Activated CD4-positive, alpha-beta memory T cell treated with anti-CD3 and anti-CD28 coated beads for 36 hours (primary cell): ENCODE measurements at regions of chr15 and their contacts with region 1.

Region 1: DNA sequence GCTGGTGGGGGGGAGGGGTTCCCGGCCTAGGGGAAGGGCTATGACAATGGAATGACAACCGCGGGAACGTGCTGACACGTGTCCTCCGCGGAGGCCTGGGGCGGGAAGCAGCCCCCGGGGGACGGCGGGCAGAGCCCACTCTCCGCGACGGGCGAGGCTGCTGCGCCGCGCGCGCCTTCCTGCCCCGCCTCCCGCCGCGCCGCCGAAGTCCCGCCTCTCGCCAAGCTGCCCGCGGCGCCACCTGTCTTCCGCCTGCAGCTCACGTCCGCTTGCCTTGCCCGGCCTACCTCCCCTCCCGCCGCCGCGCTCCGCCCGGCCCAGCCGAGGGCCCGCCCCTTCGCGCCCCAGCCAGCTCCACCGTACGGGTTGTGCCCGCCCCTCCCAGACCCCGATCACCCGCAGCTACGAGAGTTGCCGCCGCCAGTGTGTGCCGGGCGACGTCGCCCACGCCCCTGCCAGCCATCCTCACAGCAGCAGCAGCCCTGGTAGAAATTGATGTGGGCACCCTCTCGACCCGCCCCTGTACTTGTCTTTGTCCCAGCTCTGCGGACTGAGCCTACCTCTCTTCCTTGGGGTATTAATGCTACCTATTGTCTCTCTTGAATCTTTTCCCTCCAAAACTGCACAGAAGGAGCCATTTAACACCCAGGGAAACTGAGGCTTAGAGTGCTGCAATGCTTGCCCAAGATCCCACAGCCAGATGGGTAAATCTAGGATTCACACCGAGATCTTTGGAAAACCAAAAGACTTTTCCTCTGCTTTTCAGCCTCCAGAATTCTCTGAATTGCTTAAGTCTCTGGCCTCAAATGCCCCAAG is at the start of gene PARP16:
- DNase-seq: peak; percentile 95
- H3K4me3 Mint-ChIP-seq: peak within 1 kb of the TSS; percentile 83
- H3K27ac Mint-ChIP-seq: peak within 1 kb of the TSS; percentile 77
- H3K4me1 Mint-ChIP-seq: peaks cover 34% of the 10 kb centered on the region
- H3K27me3 Mint-ChIP-seq: no peaks in the 10 kb centered on the region
- total RNA-seq, gene PARP16: 12.3 TPM

Region 2: DNA sequence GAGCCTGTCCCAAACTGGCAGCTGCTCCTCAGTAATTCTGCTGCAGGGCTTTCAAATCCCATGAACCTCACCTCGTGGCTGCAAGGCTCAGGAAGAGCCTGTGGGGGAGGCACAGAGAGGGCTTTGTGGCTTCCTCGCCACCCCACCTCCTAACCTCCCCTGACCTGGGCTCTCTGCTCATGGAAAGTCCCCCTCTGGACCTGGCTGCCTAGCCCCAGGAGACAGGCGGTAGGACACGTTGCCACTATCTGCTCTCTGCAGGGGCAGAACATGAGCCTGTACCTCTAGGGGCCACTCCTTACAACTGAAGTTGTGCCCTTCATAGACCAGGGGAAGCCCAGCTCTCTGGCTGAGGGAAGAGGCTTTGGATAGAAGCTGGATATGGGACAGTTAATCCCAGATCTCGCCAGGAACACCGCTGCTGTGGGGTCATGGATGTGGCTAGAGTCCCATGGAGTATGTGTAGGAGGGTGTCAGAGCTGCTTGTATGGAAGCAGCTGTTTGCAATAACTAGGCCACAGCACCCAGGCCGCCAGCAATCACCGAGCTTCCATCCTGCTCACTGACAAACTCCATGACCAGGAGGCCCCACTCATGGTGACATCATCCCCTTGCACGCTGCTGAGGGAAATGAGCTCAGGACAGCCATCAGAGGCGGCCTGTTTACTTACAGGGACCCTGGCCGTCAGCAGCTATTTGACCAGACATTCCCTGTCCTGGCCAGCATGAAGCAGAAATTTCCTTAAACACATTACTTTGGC is 41.6 kb before region 1 on chr15:
- CTCF ChIA-PET with region 1: interaction called, 10 read pairs
- POLR2A ChIA-PET with region 1: interaction called, 4 read pairs
- intact Hi-C with region 1: loop called (anchors 5 kb)
- DNase-seq: no peak
- H3K4me3 Mint-ChIP-seq: no peak overlapping the region
- H3K27ac Mint-ChIP-seq: no peak overlapping the region
- H3K4me1 Mint-ChIP-seq: peaks cover 12% of the 10 kb centered on the region
- H3K27me3 Mint-ChIP-seq: no peaks in the 10 kb centered on the region